PC-3 (cell line): ENCODE measurements at regions of chr3 and their contacts with region 1.

Region 1: GRCh38 chr3:116445311-116445841 is at the start of gene LSAMP:
- DNase-seq: no peak
- ATAC-seq: peak; percentile 20; the same call in 1 of the 2 replicates
- H3K4me3 ChIP-seq: peak within 1 kb of the TSS; percentile 32; the same call in 1 of the 2 replicates
- H3K27ac ChIP-seq: no peak within 1 kb of the TSS
- H3K4me1 ChIP-seq: peaks cover 3% of the 10 kb centered on the region; the same call in 1 of the 2 replicates
- H3K27me3 ChIP-seq: peaks cover 26% of the 10 kb centered on the region; the same call in 1 of the 2 replicates
- CTCF ChIP-seq: no peak
- total RNA-seq, gene LSAMP: 0.15 TPM in 1 of 2 replicates, not detected in the other

Region 2: GRCh38 chr3:116433552-116433951 is 11.8 kb before region 1 on chr3:
- CTCF ChIA-PET with region 1: no interaction called
- POLR2A ChIA-PET with region 1: interaction called, 16 read pairs
- intact Hi-C with region 1: no loop called
- DNase-seq: no peak
- ATAC-seq: no peak
- H3K4me3 ChIP-seq: no peak overlapping the region
- H3K27ac ChIP-seq: no peak overlapping the region
- H3K4me1 ChIP-seq: no peaks in the 10 kb centered on the region
- H3K27me3 ChIP-seq: no peaks in the 10 kb centered on the region
- CTCF ChIP-seq: no peak